ENCODE measurements at regions of chr14 and their contacts with region 1.

Region 1: GRCh38 chr14:93939304-93940229 is 12.4 kb downstream of the FAM181A start:
- DNase-seq: peak; percentile 93
- ATAC-seq: peak; percentile 95
- H3K4me3 ChIP-seq: peak overlapping the region in 4 of 5 experiments; percentile 28 to 50 (median 47)
- H3K4me3 Mint-ChIP-seq: peak overlapping the region; percentile 78
- H3K27ac ChIP-seq: no peak overlapping the region
- H3K27ac Mint-ChIP-seq: no peak overlapping the region
- H3K4me1 ChIP-seq: peaks cover 5 to 11% of the 10 kb centered on the region in 2 donors
- H3K4me1 Mint-ChIP-seq: peaks cover 14% of the 10 kb centered on the region
- H3K27me3 ChIP-seq: peaks cover 0 to 11% (median 2%) of the 10 kb centered on the region in 4 experiments
- H3K27me3 Mint-ChIP-seq: peaks cover 10% of the 10 kb centered on the region
- CTCF ChIP-seq: peak; percentile 99

Region 2: GRCh38 chr14:93269341-93270068 is 670.1 kb before region 1 on chr14:
- CTCF ChIA-PET with region 1: no interaction called
- POLR2A ChIA-PET with region 1: no interaction called
- intact Hi-C with region 1: no loop called
- DNase-seq: no peak
- ATAC-seq: no peak
- H3K4me3 ChIP-seq: no peak overlapping the region
- H3K4me3 Mint-ChIP-seq: no peak overlapping the region
- H3K27ac ChIP-seq: no peak overlapping the region
- H3K27ac Mint-ChIP-seq: no peak overlapping the region
- H3K4me1 ChIP-seq: no peaks in the 10 kb centered on the region
- H3K4me1 Mint-ChIP-seq: peaks cover 1% of the 10 kb centered on the region
- H3K27me3 ChIP-seq: no peaks in the 10 kb centered on the region
- H3K27me3 Mint-ChIP-seq: no peaks in the 10 kb centered on the region
- CTCF ChIP-seq: no peak

Region 3: DNA sequence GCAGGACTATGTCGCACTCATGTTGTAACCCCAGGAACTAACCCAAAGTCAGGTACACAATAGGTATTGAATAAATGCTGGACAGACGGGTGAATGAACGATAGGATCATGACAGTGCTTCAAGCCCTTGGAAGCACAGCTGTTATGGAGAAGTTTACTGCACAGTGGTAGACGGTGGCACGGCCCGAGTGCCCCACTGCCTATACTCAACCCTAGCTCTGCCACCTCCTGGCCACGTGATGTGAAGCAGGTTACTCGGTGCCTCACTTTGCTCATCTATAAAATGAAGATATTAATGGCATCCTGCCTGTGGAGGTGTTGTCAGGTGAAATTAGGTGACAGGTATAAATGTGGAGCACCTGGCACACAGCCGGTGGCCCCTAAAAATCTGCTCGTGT is 31.0 kb after region 1 on chr14:
- CTCF ChIA-PET with region 1: interaction called, 1,036 read pairs
- POLR2A ChIA-PET with region 1: interaction called, 25 read pairs
- intact Hi-C with region 1: loop called (anchors 1 kb)
- DNase-seq: peak; percentile 77
- ATAC-seq: peak; percentile 58
- H3K4me3 ChIP-seq: peak overlapping the region; percentile 30 to 78 (median 70)
- H3K4me3 Mint-ChIP-seq: peak overlapping the region; percentile 93
- H3K27ac ChIP-seq: peak overlapping the region; percentile 31 to 44
- H3K27ac Mint-ChIP-seq: peak overlapping the region; percentile 86
- H3K4me1 ChIP-seq: peaks cover 60 to 62% of the 10 kb centered on the region in 2 donors
- H3K4me1 Mint-ChIP-seq: peaks cover 64% of the 10 kb centered on the region
- H3K27me3 ChIP-seq: peaks cover 0 to 19% (median 9%) of the 10 kb centered on the region in 4 experiments
- H3K27me3 Mint-ChIP-seq: peaks cover 15% of the 10 kb centered on the region
- CTCF ChIP-seq: peak; percentile 78

Region 4: GRCh38 chr14:94009767-94010166 is 70.2 kb after region 1 on chr14:
- CTCF ChIA-PET with region 1: interaction called, 367 read pairs
- POLR2A ChIA-PET with region 1: no interaction called
- intact Hi-C with region 1: no loop called
- DNase-seq: no peak
- ATAC-seq: no peak
- H3K4me3 ChIP-seq: no peak overlapping the region
- H3K4me3 Mint-ChIP-seq: no peak overlapping the region
- H3K27ac ChIP-seq: no peak overlapping the region
- H3K27ac Mint-ChIP-seq: no peak overlapping the region
- H3K4me1 ChIP-seq: peaks cover 4 to 10% of the 10 kb centered on the region in 2 donors
- H3K4me1 Mint-ChIP-seq: peaks cover 9% of the 10 kb centered on the region
- H3K27me3 ChIP-seq: peaks cover 0 to 41% (median 7%) of the 10 kb centered on the region in 4 experiments
- H3K27me3 Mint-ChIP-seq: peaks cover 49% of the 10 kb centered on the region
- CTCF ChIP-seq: no peak

Region 5: DNA sequence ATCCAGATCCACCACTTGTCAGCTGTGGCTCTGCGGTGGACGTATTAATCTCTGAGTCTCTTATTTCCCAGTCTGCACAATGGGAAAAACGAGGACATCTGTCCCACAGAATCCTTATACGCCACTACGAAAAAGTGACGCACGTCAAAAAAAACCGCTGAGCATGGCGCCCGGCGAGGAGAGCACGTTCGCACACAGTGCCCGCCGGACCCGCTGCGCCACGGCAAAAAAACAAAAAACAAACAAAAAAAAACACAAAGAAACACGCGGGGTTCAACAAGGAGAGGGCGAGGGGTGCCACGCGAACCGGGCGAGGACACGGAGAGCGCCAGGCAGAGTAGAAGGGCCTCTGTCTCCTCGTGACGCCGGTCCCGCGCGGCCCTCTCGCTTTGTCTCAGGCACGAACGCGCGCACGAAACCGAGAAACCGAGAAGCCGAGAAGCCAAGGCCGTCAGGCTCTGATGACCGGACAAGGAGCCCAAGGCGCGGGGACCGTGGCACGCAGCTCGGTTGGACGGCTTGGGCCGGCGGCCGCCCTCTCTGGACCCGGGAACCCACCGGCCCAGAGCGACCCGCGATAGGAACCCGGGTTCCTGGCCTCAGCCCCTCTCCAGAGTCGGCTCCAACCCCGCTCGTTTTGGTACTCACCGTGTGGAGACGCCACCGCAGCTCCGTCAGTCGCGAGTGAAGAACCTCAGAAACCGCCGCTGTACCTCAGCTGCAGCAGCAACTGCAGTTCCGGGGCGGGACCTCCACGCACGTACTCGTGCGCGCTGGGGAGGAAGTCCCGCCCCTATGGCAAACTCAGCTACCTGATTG is 141.1 kb after region 1 on chr14 and contains the start of gene DDX24:
- CTCF ChIA-PET with region 1: interaction called, 9 read pairs
- POLR2A ChIA-PET with region 1: no interaction called
- intact Hi-C with region 1: loop called (anchors 1 kb)
- DNase-seq: peak; percentile 97
- ATAC-seq: peak; percentile 97
- H3K4me3 ChIP-seq: peak within 1 kb of the TSS; percentile 91 to 99 (median 97)
- H3K4me3 Mint-ChIP-seq: peak within 1 kb of the TSS; percentile 97
- H3K27ac ChIP-seq: peak within 1 kb of the TSS; percentile 83 to 93
- H3K27ac Mint-ChIP-seq: peak within 1 kb of the TSS; percentile 97
- H3K4me1 ChIP-seq: peaks cover 36 to 45% of the 10 kb centered on the region in 2 donors
- H3K4me1 Mint-ChIP-seq: peaks cover 46% of the 10 kb centered on the region
- H3K27me3 ChIP-seq: no peaks in the 10 kb centered on the region
- H3K27me3 Mint-ChIP-seq: no peaks in the 10 kb centered on the region
- CTCF ChIP-seq: no peak
- total RNA-seq, gene DDX24: 191 and 211 TPM in 2 replicates

Region 6: GRCh38 chr14:94180655-94181271 is 241.2 kb after region 1 on chr14:
- CTCF ChIA-PET with region 1: interaction called, 19 read pairs
- POLR2A ChIA-PET with region 1: no interaction called
- intact Hi-C with region 1: loop called (anchors 1 kb)
- DNase-seq: peak; percentile 78
- ATAC-seq: peak; percentile 84
- H3K4me3 ChIP-seq: peak overlapping the region in 3 of 5 experiments; percentile 10 to 35 (median 20)
- H3K4me3 Mint-ChIP-seq: peak overlapping the region; percentile 8
- H3K27ac ChIP-seq: no peak overlapping the region
- H3K27ac Mint-ChIP-seq: peak overlapping the region; percentile 4
- H3K4me1 ChIP-seq: peaks cover 5 to 7% of the 10 kb centered on the region in 2 donors
- H3K4me1 Mint-ChIP-seq: peaks cover 6% of the 10 kb centered on the region
- H3K27me3 ChIP-seq: peaks cover 2 to 32% (median 17%) of the 10 kb centered on the region in 4 experiments
- H3K27me3 Mint-ChIP-seq: peaks cover 40% of the 10 kb centered on the region
- CTCF ChIP-seq: peak; percentile 82

Region 7: DNA sequence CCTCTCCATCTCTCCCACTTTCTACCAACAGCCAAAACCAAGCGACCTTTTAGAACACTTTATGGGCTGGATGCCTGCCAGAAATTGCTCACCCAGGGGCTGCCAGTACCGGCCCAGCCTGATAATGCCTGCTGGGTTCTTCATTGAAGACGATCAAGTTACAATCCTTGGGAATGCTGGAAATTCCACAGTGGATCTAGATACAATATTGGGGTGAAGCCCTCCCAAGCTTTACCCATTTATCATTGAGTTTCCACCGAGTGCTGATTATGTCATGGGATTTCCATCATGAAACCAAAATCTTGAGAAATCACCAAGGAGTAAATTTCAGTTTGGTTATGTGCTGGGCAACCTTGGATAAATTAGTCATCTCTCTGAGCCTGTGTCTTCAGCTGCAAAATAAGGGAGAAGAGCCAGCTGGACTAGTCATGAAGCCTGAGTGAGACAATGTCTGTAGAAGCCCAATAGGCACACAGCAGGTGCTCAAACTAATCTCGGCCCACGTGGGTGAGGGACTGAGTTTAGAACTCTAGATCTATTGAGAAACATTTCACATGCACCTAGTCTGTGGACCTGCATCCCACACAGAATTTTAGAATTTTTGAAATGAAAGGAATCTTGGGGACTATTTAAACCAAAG is 1455.7 kb after region 1 on chr14:
- CTCF ChIA-PET with region 1: no interaction called
- POLR2A ChIA-PET with region 1: no interaction called
- intact Hi-C with region 1: no loop called
- DNase-seq: no peak
- ATAC-seq: no peak
- H3K4me3 ChIP-seq: peak overlapping the region in 1 of 5 experiments; percentile 34
- H3K4me3 Mint-ChIP-seq: peak overlapping the region; percentile 24
- H3K27ac ChIP-seq: peak overlapping the region; percentile 77 to 80
- H3K27ac Mint-ChIP-seq: peak overlapping the region; percentile 94
- H3K4me1 ChIP-seq: peaks cover 21 to 26% of the 10 kb centered on the region in 2 donors
- H3K4me1 Mint-ChIP-seq: peaks cover 9% of the 10 kb centered on the region
- H3K27me3 ChIP-seq: no peaks in the 10 kb centered on the region
- H3K27me3 Mint-ChIP-seq: peaks cover 6% of the 10 kb centered on the region
- CTCF ChIP-seq: no peak

Measured in B cell (primary cell).